ENCODE measurements at regions of chr4 and their contacts with region 1.

Region 1: GRCh38 chr4:158856852-158857251 is 88.0 kb downstream of the FNIP2 start:
- DNase-seq: peak; percentile 47
- H3K27ac ChIP-seq: no peak overlapping the region
- CTCF ChIP-seq: peak; percentile 42

Region 2: DNA sequence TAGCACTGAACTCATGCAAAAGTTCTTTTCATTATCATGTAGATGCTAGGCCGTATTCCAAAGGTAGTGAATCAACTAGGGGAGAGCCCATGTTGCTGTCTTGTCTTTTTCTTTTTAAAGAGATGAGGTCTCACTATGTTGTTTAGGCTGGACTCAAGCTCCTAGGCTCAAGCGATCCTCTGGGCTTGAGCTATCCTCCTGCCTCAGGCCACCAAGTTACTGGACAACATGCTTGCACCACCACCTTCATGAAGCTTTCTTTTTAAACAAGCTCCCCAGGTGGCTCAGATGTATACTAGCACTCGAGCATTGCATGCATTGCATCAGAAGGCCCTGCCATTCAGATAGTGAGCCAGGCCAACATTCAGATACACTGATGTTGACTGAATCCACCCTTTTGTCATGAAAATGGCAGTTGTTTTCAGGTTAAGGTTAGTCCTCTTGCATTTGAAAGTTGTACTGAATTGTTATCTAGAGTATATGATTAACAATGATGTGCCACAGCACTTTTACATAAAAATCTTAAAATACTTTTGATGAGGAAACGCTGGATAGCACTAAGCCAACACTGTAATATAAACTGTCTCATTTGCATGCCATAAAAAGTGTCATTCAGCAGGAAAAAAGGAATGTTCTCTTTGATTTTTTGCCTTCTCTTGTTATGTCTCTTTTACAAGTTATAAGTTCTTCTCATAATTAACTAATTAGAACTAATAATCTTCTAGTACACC is 11.4 kb before region 1 on chr4:
- CTCF ChIA-PET with region 1: no interaction called
- POLR2A ChIA-PET with region 1: no interaction called
- DNase-seq: no peak
- H3K27ac ChIP-seq: no peak overlapping the region
- CTCF ChIP-seq: no peak

Region 3: DNA sequence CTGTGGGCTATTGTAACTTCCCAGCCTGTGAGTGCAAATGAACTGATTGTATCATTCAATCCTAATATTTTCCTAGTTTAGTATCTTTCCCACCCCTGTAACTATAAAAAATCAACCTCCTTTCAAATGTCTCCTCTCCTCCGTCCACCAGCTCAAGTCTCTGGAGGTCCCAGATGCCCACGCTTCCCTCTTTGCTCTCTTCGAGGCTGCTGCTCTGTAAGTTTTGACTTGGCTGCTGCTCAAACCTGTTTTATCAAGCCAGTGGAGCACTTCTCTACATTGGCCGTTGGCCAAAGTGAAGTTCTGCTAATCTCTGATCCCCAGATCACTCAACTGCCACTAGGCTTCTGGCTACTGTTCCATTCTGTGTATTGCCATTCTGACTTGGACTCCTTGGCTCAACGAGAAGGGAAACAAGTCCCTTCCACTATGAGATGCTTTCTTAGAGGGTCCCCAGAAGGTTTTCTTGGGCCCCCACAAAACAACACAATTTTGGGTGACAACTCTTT is 185.3 kb after region 1 on chr4:
- CTCF ChIA-PET with region 1: no interaction called
- POLR2A ChIA-PET with region 1: no interaction called
- DNase-seq: no peak
- H3K27ac ChIP-seq: no peak overlapping the region
- CTCF ChIP-seq: no peak

Region 4: GRCh38 chr4:159206427-159206871 is 349.6 kb after region 1 on chr4:
- CTCF ChIA-PET with region 1: interaction called, 18 read pairs
- POLR2A ChIA-PET with region 1: no interaction called
- DNase-seq: no peak
- H3K27ac ChIP-seq: no peak overlapping the region
- CTCF ChIP-seq: no peak

Measured in RWPE1 (cell line).